Heart left ventricle (tissue), 16 donors: ENCODE measurements at regions of chr18 and their contacts with region 1.

Region 1: DNA sequence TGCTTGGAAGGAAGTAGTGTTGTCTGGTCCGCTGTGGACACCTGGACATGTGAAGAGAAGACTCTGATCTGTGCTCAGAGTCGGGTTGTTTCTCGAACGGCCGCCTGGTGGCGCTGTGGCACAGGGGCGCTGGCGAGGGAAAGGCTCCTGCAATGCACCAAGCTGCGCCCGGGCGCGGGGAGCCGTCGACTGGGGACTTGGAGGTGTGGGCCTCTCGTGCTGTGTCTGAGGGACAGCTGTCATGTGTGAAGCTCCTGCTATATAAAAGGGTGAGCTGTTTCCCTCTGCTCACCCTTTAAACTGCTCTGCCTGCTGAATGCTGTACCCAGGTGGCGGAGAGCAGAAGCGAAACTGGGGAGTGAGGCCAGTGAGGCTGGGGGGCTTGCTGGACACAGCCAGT is 44.0 kb downstream of the GNAL start:
- DNase-seq: peak; percentile 63 to 88 (median 78)
- ATAC-seq: peak in 3 of 4 donors; percentile 90 to 96 (median 91)
- H3K4me3 ChIP-seq: peak overlapping the region in 8 of 12 donors; percentile 10 to 49 (median 28)
- H3K27ac ChIP-seq: no peak overlapping the region
- H3K4me1 ChIP-seq: peaks cover 0 to 4% (median 0%) of the 10 kb centered on the region in 12 donors
- H3K27me3 ChIP-seq: peaks cover 0 to 49% (median 8%) of the 10 kb centered on the region in 9 donors
- CTCF ChIP-seq: peak; percentile 72 to 93 (median 88)
- POLR2A ChIP-seq: no peak

Region 2: GRCh38 chr18:11851146-11851805 is 118.2 kb after region 1 on chr18 and contains the start of gene CHMP1B:
- intact Hi-C with region 1: loop called in 3 of 10 experiments (anchors 5 to 10 kb)
- DNase-seq: peak; percentile 98 to 99 (median 99)
- ATAC-seq: peak; percentile 97 to 99 (median 99)
- H3K4me3 ChIP-seq: peak within 1 kb of the TSS; percentile 63 to 99 (median 86)
- H3K27ac ChIP-seq: peak within 1 kb of the TSS; percentile 86 to 98 (median 94)
- H3K4me1 ChIP-seq: peaks cover 5 to 44% (median 21%) of the 10 kb centered on the region in 12 donors
- H3K27me3 ChIP-seq: no peaks in the 10 kb centered on the region
- CTCF ChIP-seq: no peak
- POLR2A ChIP-seq: peak; percentile 81 to 98
- total RNA-seq, gene CHMP1B: 29.6 to 41.2 (median 37.3) TPM

Region 3: GRCh38 chr18:11947214-11948191 is 214.5 kb after region 1 on chr18:
- intact Hi-C with region 1: loop called in 1 of 10 experiments (anchors 5 kb)
- DNase-seq: peak; percentile 93 to 97 (median 95)
- ATAC-seq: peak; percentile 98 to 99 (median 98)
- H3K4me3 ChIP-seq: peak overlapping the region; percentile 4 to 86 (median 65)
- H3K27ac ChIP-seq: peak overlapping the region; percentile 88 to 100 (median 96)
- H3K4me1 ChIP-seq: peaks cover 0 to 22% (median 13%) of the 10 kb centered on the region in 12 donors
- H3K27me3 ChIP-seq: no peaks in the 10 kb centered on the region
- CTCF ChIP-seq: peak in 2 of 12 donors; percentile 5 to 15
- POLR2A ChIP-seq: peak in 1 of 2 donors; percentile 86

Region 4: DNA sequence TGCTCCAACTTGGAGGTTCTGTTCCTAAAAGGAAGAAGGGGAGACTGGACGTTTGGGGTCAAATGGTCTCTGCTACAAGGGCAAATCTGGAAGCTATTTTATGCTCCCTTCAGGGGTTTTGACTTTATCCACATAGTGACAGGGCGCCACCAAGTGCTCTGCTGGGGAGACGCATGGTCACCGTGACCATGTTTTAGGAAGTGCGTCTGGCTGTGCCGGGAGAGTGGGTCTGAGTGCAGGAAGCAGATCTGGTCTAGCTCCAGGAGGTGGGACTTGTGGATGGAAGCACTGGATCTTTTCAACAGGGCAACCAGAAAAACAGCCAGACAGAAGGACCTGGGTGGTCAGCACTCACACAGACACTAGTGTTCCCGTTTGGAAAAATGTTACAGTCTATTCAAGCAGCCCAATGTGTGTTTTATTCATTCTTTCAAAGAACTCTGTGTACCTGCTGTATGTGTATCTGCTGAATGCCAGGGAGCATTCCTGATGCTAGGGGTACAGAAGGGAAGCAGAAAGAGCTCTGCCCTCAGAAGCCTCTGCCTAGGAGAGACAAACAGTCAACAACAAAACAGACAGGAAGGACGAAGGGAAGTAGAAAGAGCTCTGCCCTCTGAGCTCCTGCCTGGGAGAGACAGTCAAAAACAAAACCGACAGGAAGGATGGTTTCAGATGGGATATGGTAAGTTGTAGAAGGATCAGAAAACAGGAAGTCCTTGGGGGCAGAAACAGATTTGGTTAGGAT is 262.6 kb after region 1 on chr18:
- intact Hi-C with region 1: loop called in 5 of 10 experiments (anchors 2 to 10 kb)
- DNase-seq: peak; percentile 79 to 87 (median 84)
- ATAC-seq: peak; percentile 80 to 92 (median 86)
- H3K4me3 ChIP-seq: no peak overlapping the region
- H3K27ac ChIP-seq: peak overlapping the region in 10 of 12 donors; percentile 28 to 72 (median 58)
- H3K4me1 ChIP-seq: peaks cover 0 to 42% (median 24%) of the 10 kb centered on the region in 12 donors
- H3K27me3 ChIP-seq: no peaks in the 10 kb centered on the region
- CTCF ChIP-seq: peak; percentile 59 to 91 (median 80)
- POLR2A ChIP-seq: peak in 1 of 2 donors; percentile 21

Region 5: GRCh38 chr18:12038639-12039417 is 305.8 kb after region 1 on chr18:
- intact Hi-C with region 1: loop called in 7 of 10 experiments (anchors 1 to 5 kb)
- DNase-seq: peak; percentile 82 to 93 (median 89)
- ATAC-seq: peak; percentile 93 to 97 (median 96)
- H3K4me3 ChIP-seq: peak overlapping the region; percentile 24 to 67 (median 59)
- H3K27ac ChIP-seq: peak overlapping the region in 7 of 12 donors; percentile 19 to 69 (median 41)
- H3K4me1 ChIP-seq: peaks cover 0 to 15% (median 6%) of the 10 kb centered on the region in 12 donors
- H3K27me3 ChIP-seq: peaks cover 0 to 3% (median 0%) of the 10 kb centered on the region in 9 donors
- CTCF ChIP-seq: peak; percentile 98 to 99 (median 99)
- POLR2A ChIP-seq: peak in 1 of 2 donors; percentile 29